Activated CD4-positive, alpha-beta memory T cell treated with anti-CD3 and anti-CD28 coated beads, Interleukin-2, amount 10 ng/mL, durations not matched to agents 7 days and 5 days (primary cell): ENCODE measurements at regions of chr2 and their contacts with region 1.

Region 1: GRCh38 chr2:147663153-147663961 is 181.5 kb upstream of the ACVR2A start:
- DNase-seq: no peak
- H3K4me3 Mint-ChIP-seq: peak overlapping the region; percentile 63
- H3K27ac Mint-ChIP-seq: peak overlapping the region; percentile 86
- H3K4me1 Mint-ChIP-seq: peaks cover 25% of the 10 kb centered on the region
- H3K27me3 Mint-ChIP-seq: no peaks in the 10 kb centered on the region

Region 2: DNA sequence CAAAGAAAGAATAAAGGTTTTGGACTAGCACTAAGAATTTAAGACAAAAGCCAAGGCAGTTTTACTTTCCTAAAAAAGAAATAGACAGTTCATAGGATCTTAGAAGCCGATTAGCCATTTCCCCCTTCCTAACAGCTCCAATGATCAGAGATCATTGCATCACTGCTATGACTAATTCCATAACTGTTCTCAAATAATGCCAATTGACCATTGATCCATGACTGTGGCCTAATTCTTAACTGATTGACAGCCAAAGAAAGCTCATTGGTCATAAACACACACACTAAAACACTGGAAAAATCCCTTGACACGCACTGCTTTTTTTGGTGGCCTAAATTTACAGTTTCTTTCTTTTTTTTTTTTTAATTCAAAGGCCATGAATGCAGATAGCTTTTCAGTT is 163.6 kb before region 1 on chr2:
- CTCF ChIA-PET with region 1: no interaction called
- POLR2A ChIA-PET with region 1: interaction called, 13 read pairs
- DNase-seq: no peak
- H3K4me3 Mint-ChIP-seq: peak overlapping the region; percentile 33
- H3K27ac Mint-ChIP-seq: peak overlapping the region; percentile 98
- H3K4me1 Mint-ChIP-seq: peaks cover 75% of the 10 kb centered on the region
- H3K27me3 Mint-ChIP-seq: no peaks in the 10 kb centered on the region

Region 3: DNA sequence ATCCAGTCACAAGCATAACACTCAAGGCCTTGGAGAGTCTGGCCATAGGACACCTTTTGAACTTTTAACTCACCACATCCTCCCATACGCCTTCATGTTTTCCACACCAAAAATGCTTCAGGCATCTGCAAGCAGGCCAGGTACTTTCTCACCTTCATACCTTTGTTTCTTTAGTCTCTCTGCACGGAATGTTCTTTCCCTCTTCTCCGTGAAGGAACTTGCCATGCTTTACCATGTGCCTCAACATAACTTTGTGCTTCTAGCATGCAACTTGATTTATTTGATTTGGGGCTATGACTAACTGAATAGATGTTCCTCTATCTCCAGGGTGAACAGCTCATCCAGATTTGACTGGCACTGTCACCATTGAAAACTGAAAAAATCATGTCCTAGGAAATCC is 39.8 kb after region 1 on chr2:
- CTCF ChIA-PET with region 1: no interaction called
- POLR2A ChIA-PET with region 1: no interaction called
- DNase-seq: no peak
- H3K4me3 Mint-ChIP-seq: no peak overlapping the region
- H3K27ac Mint-ChIP-seq: no peak overlapping the region
- H3K4me1 Mint-ChIP-seq: no peaks in the 10 kb centered on the region
- H3K27me3 Mint-ChIP-seq: peaks cover 1% of the 10 kb centered on the region

Region 4: GRCh38 chr2:147843864-147844696 is 180.7 kb after region 1 on chr2:
- CTCF ChIA-PET with region 1: no interaction called
- POLR2A ChIA-PET with region 1: interaction called, 14 read pairs
- DNase-seq: peak; percentile 89
- H3K4me3 Mint-ChIP-seq: peak overlapping the region; percentile 92
- H3K27ac Mint-ChIP-seq: peak overlapping the region; percentile 73
- H3K4me1 Mint-ChIP-seq: peaks cover 40% of the 10 kb centered on the region
- H3K27me3 Mint-ChIP-seq: peaks cover 61% of the 10 kb centered on the region